Mammary epithelial cell (primary cell): ENCODE measurements at regions of chr12 and their contacts with region 1.

Region 1: GRCh38 chr12:18723756-18724155 is 14.1 kb downstream of the PLCZ1 start:
- DNase-seq: peak; percentile 96
- H3K4me3 ChIP-seq: no peak overlapping the region
- H3K27ac ChIP-seq: peak overlapping the region; percentile 57
- H3K4me1 ChIP-seq: peaks cover 10% of the 10 kb centered on the region
- H3K27me3 ChIP-seq: no peaks in the 10 kb centered on the region
- CTCF ChIP-seq: no peak

Region 2: GRCh38 chr12:18690653-18691052 is 33.1 kb before region 1 on chr12:
- CTCF ChIA-PET with region 1: no interaction called
- dilution Hi-C with region 1: no loop called
- in situ Hi-C with region 1: no loop called
- intact Hi-C with region 1: loop called (anchors 5 kb)
- DNase-seq: peak; percentile 99
- H3K4me3 ChIP-seq: no peak overlapping the region
- H3K27ac ChIP-seq: peak overlapping the region; percentile 96
- H3K4me1 ChIP-seq: peaks cover 21% of the 10 kb centered on the region
- H3K27me3 ChIP-seq: no peaks in the 10 kb centered on the region
- CTCF ChIP-seq: no peak